Naive thymus-derived CD4-positive, alpha-beta T cell (primary cell): ENCODE measurements at regions of chr19 and their contacts with region 1.

Region 1: DNA sequence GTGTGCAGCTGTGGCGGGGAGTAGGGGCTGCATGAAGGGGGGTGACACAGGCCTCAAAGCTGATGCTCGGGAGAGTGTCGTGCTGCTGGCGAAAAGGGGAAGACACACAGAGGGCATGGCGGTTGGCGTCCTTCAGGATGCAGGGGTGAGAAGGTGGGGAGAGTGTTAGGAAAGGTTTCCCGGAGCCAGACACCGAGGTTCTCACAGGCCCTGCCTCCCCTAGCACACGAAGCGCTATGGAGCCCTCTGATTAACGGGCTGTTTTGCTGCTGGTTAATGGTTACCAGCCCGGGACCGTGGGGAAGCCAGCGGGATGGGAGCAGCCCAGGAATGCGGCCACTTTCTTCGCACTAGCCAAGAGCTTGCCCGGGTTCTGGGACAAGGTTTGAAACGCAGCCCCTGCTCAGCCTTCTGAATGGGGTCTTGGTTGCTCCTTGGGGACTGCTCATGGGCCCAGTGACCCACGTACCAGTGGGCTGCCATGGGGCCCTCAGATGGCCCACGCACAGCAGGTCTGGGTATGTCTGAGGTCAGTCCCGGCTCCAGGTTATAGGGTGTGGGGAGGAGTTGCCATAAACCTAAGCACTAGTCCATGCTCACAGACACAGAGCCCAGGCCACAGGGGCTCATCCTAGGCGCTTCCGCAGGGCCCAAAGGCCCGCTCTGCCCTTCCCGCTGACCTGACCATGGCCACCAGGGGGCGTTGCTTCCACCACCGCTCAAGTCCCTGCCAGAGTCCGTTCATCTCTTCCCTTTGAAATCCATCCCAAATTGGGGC is 31.3 kb upstream of the ISYNA1 start:
- DNase-seq: peak in 8 of 9 donors; percentile 31 to 70 (median 51)
- ATAC-seq: peak; percentile 63
- H3K4me3 ChIP-seq: no peak overlapping the region
- H3K4me3 Mint-ChIP-seq: no peak overlapping the region
- H3K27ac ChIP-seq: no peak overlapping the region
- H3K27ac Mint-ChIP-seq: peak overlapping the region in 1 of 9 donors; percentile 42
- H3K4me1 ChIP-seq: peaks cover 0 to 19% of the 10 kb centered on the region in 2 donors
- H3K4me1 Mint-ChIP-seq: peaks cover 4 to 20% (median 12%) of the 10 kb centered on the region in 7 donors
- H3K27me3 ChIP-seq: no peaks in the 10 kb centered on the region
- H3K27me3 Mint-ChIP-seq: no peaks in the 10 kb centered on the region

Region 2: DNA sequence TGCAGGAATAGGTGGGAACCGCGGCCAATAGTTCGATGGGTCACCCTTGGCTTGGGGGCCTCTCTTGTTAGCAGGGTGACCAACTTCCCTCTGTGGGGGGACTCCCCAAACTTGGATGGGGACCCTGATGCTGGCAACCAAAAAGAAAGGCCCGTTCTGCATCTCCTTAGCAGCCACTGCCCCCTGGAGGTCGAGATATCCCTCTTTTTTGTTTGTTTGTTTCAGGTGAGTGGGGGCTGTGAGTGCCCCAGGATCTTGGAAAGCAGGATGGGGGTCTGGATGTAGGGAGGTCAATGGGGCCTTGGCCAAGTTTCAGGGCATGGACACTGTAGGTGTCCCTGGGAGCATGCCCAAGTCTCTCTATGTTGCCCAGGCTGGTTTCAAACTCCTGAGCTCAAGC is 206.5 kb after region 1 on chr19:
- CTCF ChIA-PET with region 1: no interaction called
- POLR2A ChIA-PET with region 1: no interaction called
- intact Hi-C with region 1: loop called in 1 of 2 experiments (anchors 10 kb)
- DNase-seq: peak in 4 of 9 donors; percentile 15 to 33 (median 22)
- ATAC-seq: no peak
- H3K4me3 ChIP-seq: no peak overlapping the region
- H3K4me3 Mint-ChIP-seq: no peak overlapping the region
- H3K27ac ChIP-seq: no peak overlapping the region
- H3K27ac Mint-ChIP-seq: no peak overlapping the region
- H3K4me1 ChIP-seq: no peaks in the 10 kb centered on the region
- H3K4me1 Mint-ChIP-seq: no peaks in the 10 kb centered on the region
- H3K27me3 ChIP-seq: no peaks in the 10 kb centered on the region
- H3K27me3 Mint-ChIP-seq: no peaks in the 10 kb centered on the region

Region 3: DNA sequence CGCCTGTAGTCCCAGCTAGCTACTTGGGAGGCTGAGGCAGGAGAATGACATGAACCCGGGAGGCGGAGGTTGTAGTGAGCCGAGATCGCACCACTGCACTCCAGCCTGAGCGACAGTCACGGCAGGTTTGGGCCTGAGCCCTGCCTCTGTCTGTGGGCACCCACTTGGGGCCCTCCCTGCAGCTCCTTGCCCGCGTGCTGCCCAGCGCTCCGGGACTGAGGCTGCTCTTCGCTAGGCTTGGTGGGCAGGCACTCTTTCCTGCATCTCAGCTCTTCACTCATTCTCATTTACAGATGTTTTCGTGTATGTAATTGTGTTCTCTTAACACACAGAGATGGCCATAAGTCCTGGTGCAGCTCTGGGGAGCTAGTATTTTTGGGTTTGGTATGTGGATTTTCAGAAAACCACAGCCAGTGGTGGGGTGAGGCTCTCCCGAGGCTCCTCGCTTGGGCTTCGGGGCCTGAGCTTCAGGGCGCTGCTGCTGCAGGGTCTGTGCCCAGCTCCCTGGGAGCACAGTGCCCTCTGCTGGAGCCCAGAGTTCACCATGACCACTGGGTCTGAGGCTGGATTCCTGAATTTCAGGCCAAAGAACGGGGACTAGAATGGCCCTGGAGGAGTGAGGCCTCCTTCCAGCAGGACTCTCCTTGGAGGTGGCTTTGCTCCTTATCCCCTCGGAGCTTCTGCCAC is 377.7 kb after region 1 on chr19:
- CTCF ChIA-PET with region 1: interaction called, 6 read pairs
- POLR2A ChIA-PET with region 1: no interaction called
- intact Hi-C with region 1: loop called (anchors 1 kb)
- DNase-seq: peak; percentile 45 to 70 (median 57)
- ATAC-seq: peak; percentile 83
- H3K4me3 ChIP-seq: no peak overlapping the region
- H3K4me3 Mint-ChIP-seq: peak overlapping the region in 8 of 10 donors; percentile 27 to 71 (median 56)
- H3K27ac ChIP-seq: no peak overlapping the region
- H3K27ac Mint-ChIP-seq: peak overlapping the region in 8 of 9 donors; percentile 23 to 83 (median 69)
- H3K4me1 ChIP-seq: peaks cover 32 to 34% of the 10 kb centered on the region in 2 donors
- H3K4me1 Mint-ChIP-seq: peaks cover 49 to 65% (median 54%) of the 10 kb centered on the region in 7 donors
- H3K27me3 ChIP-seq: no peaks in the 10 kb centered on the region
- H3K27me3 Mint-ChIP-seq: no peaks in the 10 kb centered on the region